Mammary epithelial cell (primary cell): ENCODE measurements at regions of chr4 and their contacts with region 1.

Region 1: DNA sequence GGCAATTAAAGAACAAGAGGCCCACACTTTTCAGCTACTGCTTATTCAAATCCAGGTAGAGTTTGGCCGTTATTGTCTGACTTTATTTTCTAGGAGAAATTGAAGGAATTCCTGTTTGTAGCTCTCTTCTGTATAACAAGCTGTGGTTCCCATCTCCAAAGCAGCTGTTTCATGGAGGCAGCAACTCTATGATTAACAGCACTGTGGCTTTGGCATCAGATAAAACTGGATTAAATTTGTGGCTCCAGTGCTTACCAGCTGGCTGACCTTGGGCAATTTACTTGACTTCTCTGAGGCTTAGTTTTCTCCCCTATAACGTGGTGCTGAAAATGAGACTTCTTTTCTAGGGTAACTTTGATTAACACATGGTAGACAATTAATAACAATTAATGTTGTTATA is 28.1 kb downstream of the SLC30A9 start:
- DNase-seq: no peak
- H3K4me3 ChIP-seq: no peak overlapping the region
- H3K27ac ChIP-seq: no peak overlapping the region
- H3K4me1 ChIP-seq: no peaks in the 10 kb centered on the region
- H3K27me3 ChIP-seq: no peaks in the 10 kb centered on the region
- CTCF ChIP-seq: no peak

Region 2: GRCh38 chr4:41963105-41963504 is 55.3 kb before region 1 on chr4:
- CTCF ChIA-PET with region 1: no interaction called
- dilution Hi-C with region 1: no loop called
- in situ Hi-C with region 1: no loop called
- intact Hi-C with region 1: loop called (anchors 10 kb)
- DNase-seq: no peak
- H3K4me3 ChIP-seq: no peak overlapping the region
- H3K27ac ChIP-seq: no peak overlapping the region
- H3K4me1 ChIP-seq: no peaks in the 10 kb centered on the region
- H3K27me3 ChIP-seq: no peaks in the 10 kb centered on the region
- CTCF ChIP-seq: peak; percentile 34